ENCODE measurements at regions of chrX and their contacts with region 1.

Region 1: DNA sequence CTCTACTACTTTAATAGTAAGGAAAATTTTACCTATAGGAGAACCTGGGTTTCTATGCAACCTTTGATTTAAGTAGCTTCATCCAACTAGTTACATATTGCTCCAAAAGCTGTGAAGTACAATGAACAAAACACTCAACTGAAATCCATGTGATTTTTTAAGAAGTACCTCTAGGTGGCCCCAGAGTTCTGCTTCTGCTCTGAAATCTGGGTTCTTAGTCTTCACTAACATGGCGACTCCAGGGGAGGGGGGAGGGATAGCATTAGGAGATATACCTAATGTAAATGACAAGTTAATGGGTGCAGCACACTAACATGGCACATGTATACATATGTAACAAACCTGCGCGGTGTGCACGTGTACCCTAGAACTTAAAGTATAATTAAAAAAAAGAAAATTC is 73.4 kb upstream of the MAGEB2 start:
- DNase-seq: no peak
- H3K4me3 ChIP-seq: no peak overlapping the region
- H3K27ac ChIP-seq: no peak overlapping the region
- H3K4me1 ChIP-seq: no peaks in the 10 kb centered on the region
- H3K27me3 ChIP-seq: no peaks in the 10 kb centered on the region
- CTCF ChIP-seq: no peak
- POLR2A ChIP-seq: no peak

Region 2: GRCh38 chrX:30441554-30441953 is 299.6 kb after region 1 on chrX:
- intact Hi-C with region 1: no loop called
- DNase-seq: no peak
- H3K4me3 ChIP-seq: no peak overlapping the region
- H3K27ac ChIP-seq: no peak overlapping the region
- H3K4me1 ChIP-seq: no peaks in the 10 kb centered on the region
- H3K27me3 ChIP-seq: no peaks in the 10 kb centered on the region
- CTCF ChIP-seq: no peak
- POLR2A ChIP-seq: no peak

Region 3: DNA sequence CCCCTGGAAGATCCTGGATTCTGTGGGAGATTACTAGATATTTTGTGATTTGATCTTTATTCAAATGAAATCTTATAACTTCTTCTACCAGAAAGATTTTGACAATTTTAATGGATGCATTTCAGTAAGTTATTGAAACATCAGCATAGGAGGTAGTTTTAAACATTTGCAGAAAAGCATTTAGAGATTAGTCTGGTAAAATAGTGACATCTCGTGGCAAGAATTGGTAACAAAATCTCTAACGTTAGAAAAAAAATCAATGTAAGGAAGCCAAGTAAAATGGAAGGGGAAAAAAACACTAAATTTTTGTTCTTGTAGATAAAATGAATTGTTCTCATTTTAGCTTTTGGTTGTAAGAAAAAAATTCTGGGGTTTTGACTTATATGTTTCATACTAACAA is 362.3 kb after region 1 on chrX:
- intact Hi-C with region 1: loop called (anchors 10 kb)
- DNase-seq: no peak
- H3K4me3 ChIP-seq: no peak overlapping the region
- H3K27ac ChIP-seq: no peak overlapping the region
- H3K4me1 ChIP-seq: no peaks in the 10 kb centered on the region
- H3K27me3 ChIP-seq: peaks cover 0 to 17% (median 0%) of the 10 kb centered on the region in 7 donors
- CTCF ChIP-seq: peak in 6 of 11 experiments; percentile 9 to 44 (median 34)
- POLR2A ChIP-seq: no peak